ENCODE measurements at regions of chr9 and their contacts with region 1.

Region 1: DNA sequence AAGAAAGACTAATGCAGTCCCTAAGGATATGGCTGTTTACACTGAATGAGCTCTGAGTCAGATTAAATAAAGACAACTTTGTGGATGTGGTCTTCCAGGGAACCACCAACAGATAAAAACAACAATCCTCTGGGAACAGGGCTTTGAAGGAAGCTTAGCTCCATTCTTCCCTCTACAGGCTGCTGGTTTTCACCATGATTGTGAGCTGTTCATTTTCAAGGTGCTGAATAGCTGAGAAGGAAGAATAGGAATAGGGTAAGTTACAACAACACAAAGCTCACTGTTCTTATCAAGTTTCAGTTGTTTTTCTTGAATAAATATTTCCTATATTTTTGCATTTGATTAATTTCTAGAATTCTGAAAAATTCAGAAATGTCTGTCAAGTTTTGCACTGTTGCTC is 25.9 kb upstream of the PTAR1 start:
- DNase-seq: peak; percentile 52
- H3K4me3 ChIP-seq: no peak overlapping the region
- H3K27ac ChIP-seq: no peak overlapping the region
- H3K27me3 ChIP-seq: no peaks in the 10 kb centered on the region
- CTCF ChIP-seq: peak; percentile 72

Region 2: GRCh38 chr9:69759421-69760277 is 26.1 kb before region 1 on chr9 and contains the start of gene PTAR1:
- CTCF ChIA-PET with region 1: interaction called, 10 read pairs
- POLR2A ChIA-PET with region 1: no interaction called
- DNase-seq: peak; percentile 67
- H3K4me3 ChIP-seq: peak within 1 kb of the TSS; percentile 82
- H3K27ac ChIP-seq: peak within 1 kb of the TSS; percentile 88
- H3K27me3 ChIP-seq: no peaks in the 10 kb centered on the region
- CTCF ChIP-seq: no peak
- polyA plus RNA-seq, gene PTAR1: 20.2 and 23.9 TPM in 2 replicates

Region 3: DNA sequence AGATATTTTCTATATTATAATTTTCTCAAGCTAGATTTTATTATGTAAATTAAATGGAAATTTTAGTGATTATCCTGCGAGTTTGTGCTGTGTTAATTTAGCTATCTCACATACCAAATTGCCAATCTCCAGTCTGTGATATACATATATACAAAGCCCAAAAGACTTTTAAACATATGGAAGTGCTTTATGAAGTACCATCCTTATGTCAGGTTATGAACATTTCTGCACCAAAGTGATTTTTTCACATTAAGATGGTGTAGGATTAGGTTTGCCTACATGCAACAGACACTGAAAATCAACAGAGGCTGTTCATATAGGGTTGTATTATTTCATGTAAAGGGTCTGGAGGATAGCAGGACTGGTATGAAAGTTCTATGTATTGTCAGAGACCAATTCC is 67.7 kb after region 1 on chr9:
- CTCF ChIA-PET with region 1: no interaction called
- POLR2A ChIA-PET with region 1: no interaction called
- DNase-seq: no peak
- H3K4me3 ChIP-seq: no peak overlapping the region
- H3K27ac ChIP-seq: no peak overlapping the region
- H3K27me3 ChIP-seq: peaks cover 5% of the 10 kb centered on the region
- CTCF ChIP-seq: no peak

Region 4: DNA sequence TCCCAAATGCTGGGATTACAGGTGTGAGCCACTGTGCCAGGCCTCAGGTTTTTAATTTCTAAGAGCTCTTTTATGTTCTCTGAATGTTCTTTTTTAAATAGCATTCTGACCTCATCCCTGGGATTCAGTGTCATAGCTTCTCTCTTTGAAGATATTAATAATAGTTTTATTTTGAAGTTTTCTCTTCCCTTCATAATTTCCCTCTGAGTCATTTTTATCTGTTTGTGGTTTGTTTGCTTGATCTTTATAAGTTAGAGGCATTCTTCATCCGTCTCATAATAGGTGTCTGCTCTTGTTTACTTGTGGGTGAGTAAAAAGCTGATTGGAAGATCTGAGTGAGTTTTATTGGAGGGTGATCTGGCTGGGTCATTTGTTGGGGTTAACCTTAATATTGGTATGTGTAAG is 245.4 kb after region 1 on chr9:
- CTCF ChIA-PET with region 1: no interaction called
- POLR2A ChIA-PET with region 1: no interaction called
- DNase-seq: no peak
- H3K4me3 ChIP-seq: no peak overlapping the region
- H3K27ac ChIP-seq: no peak overlapping the region
- H3K27me3 ChIP-seq: no peaks in the 10 kb centered on the region
- CTCF ChIP-seq: no peak

Measured in AG04450 (cell line).